K562 (cell line): ENCODE measurements at regions of chr3 and their contacts with region 1.

Region 1: GRCh38 chr3:52001443-52001974 is 5.8 kb upstream of the RPL29 start:
- DNase-seq: peak; percentile 83 to 84 (median 83)
- ATAC-seq: peak; percentile 92
- H3K4me3 ChIP-seq: no peak overlapping the region
- H3K27ac ChIP-seq: no peak overlapping the region
- H3K4me1 ChIP-seq: peaks cover 31 to 44% of the 10 kb centered on the region in 2 experiments
- H3K27me3 ChIP-seq: no peaks in the 10 kb centered on the region
- CTCF ChIP-seq: peak; percentile 90 to 99 (median 96)
- EP300 ChIP-seq: no peak
- POLR2A ChIP-seq: no peak
- RAD21 ChIP-seq: peak; percentile 77 to 91

Region 2: GRCh38 chr3:51836606-51837005 is 164.9 kb before region 1 on chr3:
- CTCF ChIA-PET with region 1: no interaction called
- POLR2A ChIA-PET with region 1: no interaction called
- in situ Hi-C with region 1: no loop called
- intact Hi-C with region 1: no loop called
- DNase-seq: no peak
- ATAC-seq: no peak
- H3K4me3 ChIP-seq: no peak overlapping the region
- H3K27ac ChIP-seq: no peak overlapping the region
- H3K4me1 ChIP-seq: no peaks in the 10 kb centered on the region
- H3K27me3 ChIP-seq: no peaks in the 10 kb centered on the region
- CTCF ChIP-seq: no peak
- EP300 ChIP-seq: no peak
- POLR2A ChIP-seq: no peak
- RAD21 ChIP-seq: no peak

Region 3: DNA sequence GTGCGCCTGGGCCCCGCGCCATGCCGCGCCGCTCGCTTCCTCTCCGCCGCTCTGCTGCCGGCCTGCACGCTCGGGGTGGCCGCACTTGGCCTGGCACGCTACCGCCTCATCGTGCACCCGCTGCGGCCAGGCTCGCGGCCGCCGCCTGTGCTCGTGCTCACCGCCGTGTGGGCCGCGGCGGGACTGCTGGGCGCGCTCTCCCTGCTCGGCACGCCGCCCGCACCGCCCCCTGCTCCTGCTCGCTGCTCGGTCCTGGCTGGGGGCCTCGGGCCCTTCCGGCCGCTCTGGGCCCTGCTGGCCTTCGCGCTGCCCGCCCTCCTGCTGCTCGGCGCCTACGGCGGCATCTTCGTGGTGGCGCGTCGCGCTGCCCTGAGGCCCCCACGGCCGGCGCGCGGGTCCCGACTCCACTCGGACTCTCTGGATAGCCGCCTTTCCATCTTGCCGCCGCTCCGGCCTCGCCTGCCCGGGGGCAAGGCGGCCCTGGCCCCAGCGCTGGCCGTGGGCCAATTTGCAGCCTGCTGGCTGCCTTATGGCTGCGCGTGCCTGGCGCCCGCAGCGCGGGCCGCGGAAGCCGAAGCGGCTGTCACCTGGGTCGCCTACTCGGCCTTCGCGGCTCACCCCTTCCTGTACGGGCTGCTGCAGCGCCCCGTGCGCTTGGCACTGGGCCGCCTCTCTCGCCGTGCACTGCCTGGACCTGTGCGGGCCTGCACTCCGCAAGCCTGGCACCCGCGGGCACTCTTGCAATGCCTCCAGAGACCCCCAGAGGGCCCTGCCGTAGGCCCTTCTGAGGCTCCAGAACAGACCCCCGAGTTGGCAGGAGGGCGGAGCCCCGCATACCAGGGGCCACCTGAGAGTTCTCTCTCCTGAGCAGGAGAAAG is 45.4 kb before region 1 on chr3:
- CTCF ChIA-PET with region 1: no interaction called
- POLR2A ChIA-PET with region 1: no interaction called
- in situ Hi-C with region 1: no loop called
- intact Hi-C with region 1: no loop called
- DNase-seq: no peak
- ATAC-seq: peak; percentile 29; the same call in 2 of the 3 replicates
- H3K4me3 ChIP-seq: no peak overlapping the region
- H3K27ac ChIP-seq: no peak overlapping the region
- H3K4me1 ChIP-seq: peaks cover 0 to 13% of the 10 kb centered on the region in 2 experiments; a peak in 2 of 5 replicates
- H3K27me3 ChIP-seq: peaks cover 0 to 4% of the 10 kb centered on the region in 2 experiments; a peak in 2 of 5 replicates
- CTCF ChIP-seq: no peak
- EP300 ChIP-seq: no peak
- POLR2A ChIP-seq: no peak
- RAD21 ChIP-seq: no peak

Region 4: DNA sequence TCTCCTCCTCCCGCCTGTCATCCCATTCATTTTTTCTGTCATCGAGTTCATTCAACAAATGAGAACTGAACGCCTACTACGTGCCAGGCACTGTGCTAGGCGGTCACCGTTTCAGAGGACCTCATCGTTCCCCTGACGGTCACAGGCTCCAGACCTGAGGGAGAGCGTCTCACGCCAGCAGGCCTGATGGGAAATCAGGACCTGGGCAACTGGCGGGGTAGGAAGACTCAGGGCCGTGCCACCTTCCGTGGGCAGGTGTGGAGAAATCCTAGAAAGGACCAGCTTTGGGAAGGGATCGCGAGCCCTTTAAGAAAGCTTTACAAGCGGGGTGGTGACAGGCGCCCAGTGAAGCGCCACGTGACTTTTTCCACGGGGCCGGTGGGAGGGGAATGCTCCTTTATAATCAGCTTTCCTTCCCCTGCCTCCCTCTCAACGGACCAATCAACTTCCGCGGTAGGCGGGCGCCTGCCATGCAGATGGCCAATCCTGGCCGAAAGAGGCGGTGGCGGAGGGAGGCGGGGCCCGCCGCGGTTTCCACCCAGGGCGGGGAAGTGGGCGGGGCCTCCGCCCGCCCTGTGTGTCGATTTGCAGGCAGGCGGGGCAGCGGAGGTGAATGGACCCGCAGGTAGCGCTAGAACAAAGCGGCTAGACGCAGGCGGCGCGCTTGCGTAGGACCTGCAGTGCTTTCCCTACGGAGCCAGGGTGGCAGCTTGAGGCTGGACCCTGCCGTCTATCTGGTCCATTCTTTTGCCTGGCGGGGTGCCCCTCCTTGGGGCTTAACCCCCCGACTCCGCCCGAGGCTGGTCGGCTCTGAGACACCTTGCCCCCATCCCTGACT is 55.7 kb after region 1 on chr3:
- CTCF ChIA-PET with region 1: interaction called, 7 read pairs
- POLR2A ChIA-PET with region 1: interaction called, 3 read pairs
- in situ Hi-C with region 1: no loop called
- intact Hi-C with region 1: loop called (anchors 5 kb)
- DNase-seq: peak; percentile 93 to 98 (median 96)
- ATAC-seq: peak; percentile 91
- H3K4me3 ChIP-seq: peak overlapping the region; percentile 61
- H3K27ac ChIP-seq: peak overlapping the region; percentile 68
- H3K4me1 ChIP-seq: peaks cover 17 to 52% of the 10 kb centered on the region in 2 experiments; a peak in 4 of 5 replicates
- H3K27me3 ChIP-seq: no peaks in the 10 kb centered on the region
- CTCF ChIP-seq: 0 out of 6 replicates have a peak, but pooled peaks of 1 of the 3 experiments have one; percentile 11
- EP300 ChIP-seq: no peak
- POLR2A ChIP-seq: 0 out of 2 replicates have a peak, but pooled peaks have one; percentile 40
- RAD21 ChIP-seq: no peak; a peak in 1 of 4 replicates

Region 5: DNA sequence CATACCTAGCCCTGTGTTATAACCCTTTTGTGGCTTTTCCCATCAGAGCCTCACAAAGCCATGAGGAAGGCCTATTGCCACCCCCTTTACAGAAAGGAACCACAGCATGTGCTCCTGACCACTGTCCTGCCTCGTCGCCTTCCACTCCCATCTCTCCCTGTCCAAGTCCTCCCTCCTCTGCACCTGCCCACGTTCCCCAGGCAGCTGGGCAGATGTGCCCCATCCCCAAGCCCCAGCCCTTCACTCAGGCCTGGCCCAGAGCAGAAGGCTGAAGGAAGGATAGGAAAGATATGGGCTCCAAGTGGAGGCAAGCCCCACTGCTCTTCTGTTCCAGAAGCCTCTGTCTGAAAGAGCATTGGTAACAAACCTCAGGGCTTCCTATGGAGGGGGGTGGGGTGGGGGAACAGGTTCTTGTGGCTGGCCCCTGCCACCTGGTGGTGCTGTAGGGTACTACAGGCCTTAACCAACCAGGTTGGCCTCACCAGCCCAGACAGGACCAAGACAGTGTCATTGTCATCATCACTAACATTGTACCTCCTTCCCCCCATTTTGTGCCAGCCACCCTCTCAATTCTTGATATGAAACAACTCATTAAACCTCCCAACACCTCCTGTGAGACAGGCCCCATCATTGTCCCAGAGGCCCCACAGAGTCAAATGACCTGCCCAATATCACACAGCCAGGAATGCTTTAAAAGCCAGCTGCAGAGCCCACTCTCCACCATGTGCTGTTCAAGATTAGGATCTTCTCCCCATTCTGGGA is 142.7 kb after region 1 on chr3:
- CTCF ChIA-PET with region 1: interaction called, 36 read pairs
- POLR2A ChIA-PET with region 1: interaction called, 3 read pairs
- in situ Hi-C with region 1: no loop called
- intact Hi-C with region 1: loop called (anchors 1 kb)
- DNase-seq: peak; percentile 80 to 86 (median 84)
- ATAC-seq: peak; percentile 98
- H3K4me3 ChIP-seq: no peak overlapping the region
- H3K27ac ChIP-seq: no peak overlapping the region
- H3K4me1 ChIP-seq: no peaks in the 10 kb centered on the region
- H3K27me3 ChIP-seq: no peaks in the 10 kb centered on the region
- CTCF ChIP-seq: peak; percentile 83 to 85 (median 84)
- EP300 ChIP-seq: no peak
- POLR2A ChIP-seq: no peak
- RAD21 ChIP-seq: peak; percentile 89 to 92

Region 6: GRCh38 chr3:52291508-52292181 is 290.1 kb after region 1 on chr3:
- CTCF ChIA-PET with region 1: no interaction called
- POLR2A ChIA-PET with region 1: no interaction called
- in situ Hi-C with region 1: no loop called
- intact Hi-C with region 1: loop called (anchors 5 kb)
- DNase-seq: peak in 2 of 4 experiments; percentile 52 to 57
- ATAC-seq: peak; percentile 48
- H3K4me3 ChIP-seq: no peak overlapping the region
- H3K27ac ChIP-seq: no peak overlapping the region
- H3K4me1 ChIP-seq: peaks cover 12 to 26% of the 10 kb centered on the region in 2 experiments; a peak in 4 of 5 replicates
- H3K27me3 ChIP-seq: no peaks in the 10 kb centered on the region
- CTCF ChIP-seq: peak; percentile 60 to 77 (median 77)
- EP300 ChIP-seq: no peak
- POLR2A ChIP-seq: no peak
- RAD21 ChIP-seq: peak; percentile 80 to 87

Region 7: GRCh38 chr3:52385157-52385556 is 383.6 kb after region 1 on chr3:
- CTCF ChIA-PET with region 1: interaction called, 4 read pairs
- POLR2A ChIA-PET with region 1: no interaction called
- in situ Hi-C with region 1: loop called (anchors 25 kb)
- intact Hi-C with region 1: no loop called
- DNase-seq: peak; percentile 79 to 83 (median 80)
- ATAC-seq: peak; percentile 94
- H3K4me3 ChIP-seq: no peak overlapping the region
- H3K27ac ChIP-seq: no peak overlapping the region
- H3K4me1 ChIP-seq: peaks cover 0 to 44% of the 10 kb centered on the region in 2 experiments; a peak in 2 of 5 replicates
- H3K27me3 ChIP-seq: no peaks in the 10 kb centered on the region
- CTCF ChIP-seq: peak; percentile 91 to 99 (median 99)
- EP300 ChIP-seq: no peak
- POLR2A ChIP-seq: no peak
- RAD21 ChIP-seq: peak; percentile 25 to 80